H1 (cell line): ENCODE measurements at regions of chr11 and their contacts with region 1.

Region 1: GRCh38 chr11:79493555-79494171 is 52.8 kb upstream of the TENM4 start:
- DNase-seq: peak; percentile 92 to 98
- H3K4me3 ChIP-seq: no peak overlapping the region
- H3K27ac ChIP-seq: no peak overlapping the region
- H3K4me1 ChIP-seq: peaks cover 0 to 2% (median 0%) of the 10 kb centered on the region in 4 experiments; a peak in 1 of 7 replicates
- H3K27me3 ChIP-seq: no peaks in the 10 kb centered on the region
- CTCF ChIP-seq: peak; percentile 88 to 98 (median 96)
- EP300 ChIP-seq: peak in 1 of 2 experiments; percentile 28; a peak in 1 of 3 replicates
- POLR2A ChIP-seq: no peak
- RAD21 ChIP-seq: peak; percentile 91 to 97

Region 2: DNA sequence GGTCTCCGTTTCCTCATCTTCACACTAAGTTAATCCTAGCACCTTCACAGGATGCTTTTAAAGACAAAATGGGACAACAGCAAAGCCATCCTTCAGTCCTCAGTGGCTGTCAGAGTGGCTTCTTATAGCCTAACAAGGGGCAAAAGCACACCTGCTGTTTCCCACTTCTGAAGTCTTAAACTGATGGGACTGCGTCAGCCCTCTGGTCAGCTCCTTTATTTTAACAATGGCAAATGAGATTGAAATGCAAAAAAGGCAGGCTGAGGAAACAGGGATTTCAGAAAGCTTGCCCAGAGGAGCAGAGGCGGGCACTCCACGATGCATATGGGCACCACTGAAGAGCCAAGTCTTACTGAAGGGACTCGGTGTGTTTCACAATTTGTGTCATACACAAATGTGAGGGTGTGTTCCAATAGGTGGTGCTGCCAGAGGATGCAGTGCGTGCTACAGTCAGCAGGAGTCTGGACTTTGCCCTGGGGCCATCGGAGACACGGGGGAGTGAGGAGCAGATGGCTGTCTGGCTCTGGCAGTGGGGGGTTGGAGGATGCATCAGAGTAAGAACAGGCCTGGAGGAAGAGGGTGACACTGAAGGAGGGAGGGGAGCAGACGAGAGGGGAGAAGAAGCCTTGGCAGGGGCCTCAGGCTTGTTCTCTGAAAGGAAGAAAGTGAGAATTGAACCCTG is 100.2 kb before region 1 on chr11:
- CTCF ChIA-PET with region 1: interaction called, 16 read pairs
- POLR2A ChIA-PET with region 1: no interaction called
- DNase-seq: peak; percentile 27 to 52
- H3K4me3 ChIP-seq: peak overlapping the region in 1 of 4 experiments; percentile 13; a peak in 1 of 8 replicates
- H3K27ac ChIP-seq: no peak overlapping the region
- H3K4me1 ChIP-seq: peaks cover 0 to 12% (median 5%) of the 10 kb centered on the region in 4 experiments; a peak in 4 of 7 replicates
- H3K27me3 ChIP-seq: no peaks in the 10 kb centered on the region
- CTCF ChIP-seq: peak in 1 of 3 experiments; percentile 10; a peak in 2 of 4 replicates
- EP300 ChIP-seq: no peak
- POLR2A ChIP-seq: no peak
- RAD21 ChIP-seq: peak in 1 of 2 experiments; percentile 6; a peak in 1 of 4 replicates

Region 3: GRCh38 chr11:79447038-79447786 is 46.5 kb before region 1 on chr11:
- CTCF ChIA-PET with region 1: interaction called, 36 read pairs
- POLR2A ChIA-PET with region 1: no interaction called
- DNase-seq: no peak
- H3K4me3 ChIP-seq: no peak overlapping the region
- H3K27ac ChIP-seq: no peak overlapping the region
- H3K4me1 ChIP-seq: no peaks in the 10 kb centered on the region; a peak in 1 of 7 replicates
- H3K27me3 ChIP-seq: peaks cover 0 to 7% (median 4%) of the 10 kb centered on the region in 4 experiments; a peak in 4 of 7 replicates
- CTCF ChIP-seq: no peak
- EP300 ChIP-seq: no peak
- POLR2A ChIP-seq: no peak
- RAD21 ChIP-seq: no peak

Region 4: GRCh38 chr11:79471071-79471844 is 22.4 kb before region 1 on chr11:
- CTCF ChIA-PET with region 1: interaction called, 16 read pairs
- POLR2A ChIA-PET with region 1: interaction called, 4 read pairs
- DNase-seq: no peak
- H3K4me3 ChIP-seq: no peak overlapping the region
- H3K27ac ChIP-seq: no peak overlapping the region
- H3K4me1 ChIP-seq: peaks cover 16 to 41% (median 33%) of the 10 kb centered on the region in 4 experiments
- H3K27me3 ChIP-seq: peaks cover 0 to 2% (median 0%) of the 10 kb centered on the region in 4 experiments; a peak in 1 of 7 replicates
- CTCF ChIP-seq: no peak
- EP300 ChIP-seq: no peak
- POLR2A ChIP-seq: no peak
- RAD21 ChIP-seq: no peak

Region 5: GRCh38 chr11:79508461-79508860 is 14.8 kb after region 1 on chr11:
- CTCF ChIA-PET with region 1: interaction called, 20 read pairs
- POLR2A ChIA-PET with region 1: interaction called, 3 read pairs
- DNase-seq: no peak
- H3K4me3 ChIP-seq: no peak overlapping the region
- H3K27ac ChIP-seq: no peak overlapping the region
- H3K4me1 ChIP-seq: no peaks in the 10 kb centered on the region; a peak in 1 of 7 replicates
- H3K27me3 ChIP-seq: peaks cover 0 to 2% (median 0%) of the 10 kb centered on the region in 4 experiments; a peak in 1 of 7 replicates
- CTCF ChIP-seq: no peak
- EP300 ChIP-seq: no peak
- POLR2A ChIP-seq: no peak
- RAD21 ChIP-seq: no peak